B cell (primary cell): ENCODE measurements at regions of chr7 and their contacts with region 1.

Region 1: DNA sequence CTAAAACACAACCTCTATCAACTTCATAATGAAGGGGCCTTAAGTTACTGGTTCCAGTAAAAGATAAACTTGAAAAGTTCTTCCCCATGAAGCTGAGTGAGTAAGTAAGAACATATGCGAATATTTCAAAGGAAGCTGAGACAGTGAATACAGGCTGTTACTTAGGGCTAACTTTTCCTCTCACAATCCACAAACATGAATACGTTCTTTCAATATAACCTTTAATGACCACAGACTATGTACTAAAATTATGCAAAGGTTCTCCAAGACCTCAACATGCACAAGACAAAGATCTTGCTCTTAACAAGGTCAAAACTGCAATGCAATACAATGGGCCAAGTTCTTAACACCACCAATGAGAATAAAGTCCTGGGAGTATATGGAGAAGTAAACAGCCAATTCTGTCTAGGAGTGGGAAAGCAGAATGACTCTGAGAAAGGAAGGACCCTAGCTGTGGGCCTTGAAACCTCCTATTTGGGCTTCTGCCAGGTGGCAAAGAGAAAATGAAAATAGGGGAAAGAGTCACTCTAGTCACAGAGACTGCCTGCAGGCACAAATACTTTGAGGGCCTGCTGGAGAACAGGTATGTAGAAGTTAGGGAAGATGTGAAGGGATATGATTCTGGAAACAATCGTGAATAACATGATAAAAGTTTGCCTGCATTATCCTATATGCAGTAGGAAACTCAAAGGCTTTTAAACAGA is 43.7 kb downstream of the OSBPL3 start:
- DNase-seq: no peak
- ATAC-seq: no peak
- H3K4me3 ChIP-seq: no peak overlapping the region
- H3K4me3 Mint-ChIP-seq: no peak overlapping the region
- H3K27ac ChIP-seq: no peak overlapping the region
- H3K27ac Mint-ChIP-seq: no peak overlapping the region
- H3K4me1 ChIP-seq: peaks cover 19 to 30% of the 10 kb centered on the region in 2 donors
- H3K4me1 Mint-ChIP-seq: peaks cover 61% of the 10 kb centered on the region
- H3K27me3 ChIP-seq: no peaks in the 10 kb centered on the region
- H3K27me3 Mint-ChIP-seq: no peaks in the 10 kb centered on the region
- CTCF ChIP-seq: no peak

Region 2: GRCh38 chr7:24948739-24949138 is 12.5 kb after region 1 on chr7:
- CTCF ChIA-PET with region 1: interaction called, 3 read pairs
- POLR2A ChIA-PET with region 1: no interaction called
- intact Hi-C with region 1: loop called (anchors 2 kb)
- DNase-seq: no peak
- ATAC-seq: no peak
- H3K4me3 ChIP-seq: no peak overlapping the region
- H3K4me3 Mint-ChIP-seq: peak overlapping the region; percentile 2
- H3K27ac ChIP-seq: no peak overlapping the region
- H3K27ac Mint-ChIP-seq: no peak overlapping the region
- H3K4me1 ChIP-seq: peaks cover 0 to 4% of the 10 kb centered on the region in 2 donors
- H3K4me1 Mint-ChIP-seq: peaks cover 35% of the 10 kb centered on the region
- H3K27me3 ChIP-seq: no peaks in the 10 kb centered on the region
- H3K27me3 Mint-ChIP-seq: no peaks in the 10 kb centered on the region
- CTCF ChIP-seq: no peak